Activated B cell treated with CpG ODN at 0.5 μM for 24 hours (primary cell): ENCODE measurements at regions of chr9 and their contacts with region 1.

Region 1: DNA sequence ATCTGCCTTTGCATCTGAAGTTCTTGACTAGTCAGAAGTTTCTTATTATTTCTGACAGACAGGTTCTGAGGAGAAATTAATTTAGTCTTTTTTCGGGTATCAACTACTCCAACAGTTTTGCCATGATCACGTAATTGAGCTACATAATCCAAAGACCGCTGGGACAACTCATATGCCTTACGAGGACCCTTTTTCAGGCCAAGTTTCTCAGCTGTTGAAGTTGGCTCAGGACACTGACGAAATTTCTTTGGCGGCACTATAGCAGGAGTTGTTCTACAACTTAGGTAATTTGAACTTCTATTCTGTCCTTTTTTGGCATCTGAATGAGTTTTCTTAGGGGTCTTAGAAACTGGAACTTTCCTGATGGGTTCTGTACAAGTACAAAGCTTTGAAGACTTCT is 27.2 kb downstream of the SETX start:
- DNase-seq: no peak
- ATAC-seq: no peak
- H3K4me3 Mint-ChIP-seq: no peak overlapping the region
- H3K27ac Mint-ChIP-seq: no peak overlapping the region
- H3K4me1 Mint-ChIP-seq: peaks cover 16% of the 10 kb centered on the region
- H3K27me3 Mint-ChIP-seq: no peaks in the 10 kb centered on the region
- CTCF ChIP-seq: no peak

Region 2: GRCh38 chr9:132293145-132293721 is 34.3 kb before region 1 on chr9:
- CTCF ChIA-PET with region 1: no interaction called
- POLR2A ChIA-PET with region 1: no interaction called
- intact Hi-C with region 1: loop called (anchors 5 kb)
- DNase-seq: no peak
- ATAC-seq: no peak
- H3K4me3 Mint-ChIP-seq: no peak overlapping the region
- H3K27ac Mint-ChIP-seq: no peak overlapping the region
- H3K4me1 Mint-ChIP-seq: no peaks in the 10 kb centered on the region
- H3K27me3 Mint-ChIP-seq: no peaks in the 10 kb centered on the region
- CTCF ChIP-seq: no peak